ENCODE measurements at regions of chr2 and their contacts with region 1.

Region 1: GRCh38 chr2:112726497-112727190 is 5.8 kb downstream of the NT5DC4 start:
- DNase-seq: peak; percentile 87 to 95
- H3K4me3 ChIP-seq: no peak overlapping the region
- H3K27ac ChIP-seq: peak overlapping the region; percentile 77
- H3K4me1 ChIP-seq: peaks cover 26% of the 10 kb centered on the region
- H3K27me3 ChIP-seq: no peaks in the 10 kb centered on the region
- CTCF ChIP-seq: peak; percentile 96

Region 2: DNA sequence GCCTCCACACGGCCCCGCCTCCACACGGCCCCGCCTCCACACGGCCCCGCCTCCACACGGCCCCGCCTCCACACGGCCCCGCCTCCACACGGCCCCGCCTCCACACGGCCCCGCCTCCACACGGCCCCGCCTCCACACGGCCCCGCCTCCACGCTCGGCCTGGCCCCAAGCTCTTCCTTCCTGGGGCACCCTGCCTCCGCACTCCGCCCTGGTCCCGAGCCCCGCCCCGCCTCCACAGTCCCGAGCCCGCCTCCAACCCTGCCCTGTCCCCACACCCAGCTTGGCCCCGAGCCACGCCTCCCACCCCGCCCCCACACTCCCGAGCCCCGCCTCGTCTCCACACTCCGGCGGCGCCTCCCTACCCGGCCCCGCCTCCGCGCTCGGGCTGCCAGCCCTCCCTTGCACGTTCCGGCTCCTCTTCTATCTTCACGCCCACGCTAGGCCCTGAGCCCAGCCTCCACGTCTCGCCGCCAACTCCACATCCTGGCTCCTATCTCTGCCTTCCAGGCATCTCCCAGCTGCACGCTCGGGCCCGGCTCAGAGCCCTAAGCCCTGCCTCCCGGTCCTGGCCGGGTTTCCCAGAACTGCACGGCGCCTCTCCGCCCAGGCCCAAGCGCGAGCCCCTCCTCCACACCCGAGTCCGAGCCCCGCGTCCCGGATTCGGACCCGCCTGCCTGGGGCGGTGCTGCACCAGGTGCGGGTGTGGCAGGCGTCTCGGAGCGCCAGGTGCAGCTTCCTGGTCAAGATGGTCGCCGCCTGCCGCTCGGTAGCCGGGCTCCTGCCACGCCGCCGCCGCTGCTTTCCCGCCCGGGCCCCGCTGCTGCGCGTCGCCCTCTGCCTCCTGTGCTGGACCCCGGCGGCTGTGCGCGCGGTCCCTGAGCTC is 671.6 kb before region 1 on chr2 and contains the start of gene TMEM87B:
- CTCF ChIA-PET with region 1: no interaction called
- POLR2A ChIA-PET with region 1: no interaction called
- intact Hi-C with region 1: loop called (anchors 10 kb)
- DNase-seq: peak; percentile 82 to 96
- H3K4me3 ChIP-seq: peak within 1 kb of the TSS; percentile 87
- H3K27ac ChIP-seq: peak within 1 kb of the TSS; percentile 71
- H3K4me1 ChIP-seq: peaks cover 30% of the 10 kb centered on the region
- H3K27me3 ChIP-seq: no peaks in the 10 kb centered on the region
- CTCF ChIP-seq: no peak
- total RNA-seq, gene TMEM87B: 20.1 and 24.4 TPM in 2 replicates

Region 3: DNA sequence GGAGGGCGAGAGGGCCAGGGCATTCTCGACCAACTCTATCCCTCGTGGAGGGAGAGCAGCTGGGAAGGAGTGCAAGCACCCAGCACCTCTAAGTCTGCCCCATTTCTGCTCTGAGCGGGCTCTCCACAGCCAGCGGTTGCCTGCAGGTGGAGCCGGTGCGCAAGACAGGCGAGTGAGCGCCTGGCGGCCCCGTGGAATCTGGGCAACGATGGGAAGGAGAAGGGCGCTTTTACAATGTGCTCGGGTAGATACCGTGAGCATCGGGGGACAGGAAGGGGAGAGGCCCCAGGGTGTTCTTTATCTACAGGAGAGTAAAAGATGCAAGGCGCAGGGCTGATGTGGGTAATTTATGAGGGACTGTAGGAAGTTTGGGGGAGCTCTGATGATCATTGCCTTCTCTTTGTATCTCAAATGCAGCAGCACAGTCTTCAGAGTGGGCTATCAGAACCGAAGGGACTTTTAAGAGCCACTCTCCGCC is 245.6 kb before region 1 on chr2:
- CTCF ChIA-PET with region 1: no interaction called
- POLR2A ChIA-PET with region 1: no interaction called
- intact Hi-C with region 1: loop called (anchors 1 kb)
- DNase-seq: peak; percentile 74 to 77
- H3K4me3 ChIP-seq: peak overlapping the region; percentile 74
- H3K27ac ChIP-seq: peak overlapping the region; percentile 28; the same call in 1 of the 2 replicates
- H3K4me1 ChIP-seq: peaks cover 15% of the 10 kb centered on the region
- H3K27me3 ChIP-seq: no peaks in the 10 kb centered on the region
- CTCF ChIP-seq: peak; percentile 62

Region 4: GRCh38 chr2:112601751-112602150 is 124.9 kb before region 1 on chr2:
- CTCF ChIA-PET with region 1: interaction called, 10 read pairs
- POLR2A ChIA-PET with region 1: no interaction called
- intact Hi-C with region 1: loop called (anchors 1 kb)
- DNase-seq: no peak
- H3K4me3 ChIP-seq: no peak overlapping the region
- H3K27ac ChIP-seq: no peak overlapping the region
- H3K4me1 ChIP-seq: peaks cover 23% of the 10 kb centered on the region
- H3K27me3 ChIP-seq: no peaks in the 10 kb centered on the region
- CTCF ChIP-seq: no peak

Region 5: DNA sequence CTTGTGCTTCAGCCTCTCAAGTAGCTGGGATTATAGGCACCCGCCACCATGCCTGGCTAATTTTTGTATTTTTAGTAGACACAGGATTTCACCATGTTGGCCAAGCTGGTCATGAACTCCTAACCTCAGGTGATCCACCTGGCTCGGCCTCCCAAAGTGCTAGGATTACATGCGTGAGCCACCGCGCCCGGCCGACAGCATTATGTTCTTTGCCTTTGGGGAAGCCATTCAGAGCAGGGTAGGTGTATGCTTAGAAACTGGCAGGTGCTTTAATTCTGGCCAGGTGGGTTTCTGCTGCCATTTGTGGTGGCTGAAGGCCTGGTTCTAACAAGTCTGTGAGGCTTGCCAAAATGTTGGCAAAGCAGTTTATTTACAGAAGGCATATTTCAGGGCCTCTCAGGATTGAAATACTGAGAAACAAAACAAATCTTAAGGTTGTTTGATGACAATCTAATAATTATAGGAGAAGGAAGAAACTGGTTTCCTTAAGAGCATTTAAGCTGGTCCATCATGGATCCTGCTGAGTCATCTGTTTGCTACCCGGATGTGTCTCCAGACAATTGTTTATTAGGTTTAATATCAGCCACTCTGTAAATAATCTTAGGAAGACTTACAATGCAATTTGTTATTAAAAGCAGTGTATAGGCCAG is 64.9 kb before region 1 on chr2:
- CTCF ChIA-PET with region 1: interaction called, 3 read pairs
- POLR2A ChIA-PET with region 1: no interaction called
- intact Hi-C with region 1: loop called (anchors 5 kb)
- DNase-seq: peak; percentile 30 to 92
- H3K4me3 ChIP-seq: no peak overlapping the region
- H3K27ac ChIP-seq: peak overlapping the region; percentile 67
- H3K4me1 ChIP-seq: peaks cover 95% of the 10 kb centered on the region
- H3K27me3 ChIP-seq: no peaks in the 10 kb centered on the region
- CTCF ChIP-seq: no peak

Measured in PC-9 (cell line).